PC-3 (cell line): ENCODE measurements at regions of chr12 and their contacts with region 1.

Region 1: GRCh38 chr12:67910360-67911274 is 78.6 kb upstream of the IFNG-AS1 start:
- DNase-seq: peak; percentile 97
- ATAC-seq: peak; percentile 81
- H3K4me3 ChIP-seq: no peak overlapping the region
- H3K27ac ChIP-seq: peak overlapping the region; percentile 89
- H3K4me1 ChIP-seq: peaks cover 38% of the 10 kb centered on the region
- H3K27me3 ChIP-seq: no peaks in the 10 kb centered on the region
- CTCF ChIP-seq: no peak

Region 2: GRCh38 chr12:67592216-67593011 is 318.2 kb before region 1 on chr12:
- CTCF ChIA-PET with region 1: no interaction called
- POLR2A ChIA-PET with region 1: interaction called, 16 read pairs
- intact Hi-C with region 1: no loop called
- DNase-seq: peak; percentile 66
- ATAC-seq: peak; percentile 56
- H3K4me3 ChIP-seq: peak overlapping the region; percentile 47
- H3K27ac ChIP-seq: peak overlapping the region; percentile 81
- H3K4me1 ChIP-seq: peaks cover 37% of the 10 kb centered on the region
- H3K27me3 ChIP-seq: no peaks in the 10 kb centered on the region
- CTCF ChIP-seq: no peak

Region 3: DNA sequence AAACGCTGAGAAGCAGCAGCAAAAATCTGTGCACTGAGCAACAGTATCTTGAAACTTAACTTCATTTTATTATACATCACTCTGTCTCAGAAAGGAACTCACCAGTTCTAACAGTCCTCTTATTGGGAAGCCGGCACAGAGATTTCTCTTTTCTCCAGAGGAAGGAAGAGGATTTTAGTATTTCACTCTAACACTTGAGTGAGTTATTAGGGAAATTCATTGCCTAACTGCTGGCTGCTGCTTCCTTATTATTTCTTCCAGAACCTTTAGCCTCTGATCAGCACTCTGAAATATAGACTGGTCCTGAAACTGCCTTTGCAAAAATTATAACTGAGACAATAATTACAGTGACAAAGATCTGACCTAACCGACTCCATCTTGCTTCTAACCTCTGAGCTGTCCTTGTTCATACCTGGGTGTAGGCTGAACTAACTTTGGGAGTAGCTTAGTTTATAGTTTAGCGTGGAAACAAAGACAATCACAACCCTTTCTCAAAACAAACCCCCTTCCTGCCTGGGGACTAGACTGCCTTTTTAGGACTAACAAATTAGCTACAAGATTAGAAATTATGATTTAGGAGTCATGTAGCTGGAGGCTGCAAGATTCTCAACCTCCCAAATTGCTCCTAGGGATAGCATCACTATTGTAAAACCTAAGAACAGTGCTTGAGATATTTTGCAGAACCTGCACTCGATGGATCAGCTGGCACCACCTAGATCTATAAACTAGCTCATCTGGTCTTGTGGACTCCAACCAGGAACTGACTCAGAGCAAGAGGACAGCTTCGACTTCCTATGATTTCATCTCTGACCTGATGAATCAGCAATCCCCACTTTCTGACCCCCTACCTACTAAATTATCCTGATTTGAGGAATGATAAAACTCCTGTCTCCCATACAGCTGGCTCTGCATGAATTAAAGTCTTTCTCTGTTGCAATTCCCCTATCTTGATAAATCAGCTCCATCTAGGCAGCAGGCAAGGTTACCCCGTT is 144.5 kb before region 1 on chr12:
- CTCF ChIA-PET with region 1: no interaction called
- POLR2A ChIA-PET with region 1: interaction called, 3 read pairs
- intact Hi-C with region 1: loop called (anchors 5 kb)
- DNase-seq: peak; percentile 94
- ATAC-seq: peak; percentile 97
- H3K4me3 ChIP-seq: no peak overlapping the region
- H3K27ac ChIP-seq: peak overlapping the region; percentile 81
- H3K4me1 ChIP-seq: peaks cover 19% of the 10 kb centered on the region
- H3K27me3 ChIP-seq: no peaks in the 10 kb centered on the region
- CTCF ChIP-seq: no peak

Region 4: DNA sequence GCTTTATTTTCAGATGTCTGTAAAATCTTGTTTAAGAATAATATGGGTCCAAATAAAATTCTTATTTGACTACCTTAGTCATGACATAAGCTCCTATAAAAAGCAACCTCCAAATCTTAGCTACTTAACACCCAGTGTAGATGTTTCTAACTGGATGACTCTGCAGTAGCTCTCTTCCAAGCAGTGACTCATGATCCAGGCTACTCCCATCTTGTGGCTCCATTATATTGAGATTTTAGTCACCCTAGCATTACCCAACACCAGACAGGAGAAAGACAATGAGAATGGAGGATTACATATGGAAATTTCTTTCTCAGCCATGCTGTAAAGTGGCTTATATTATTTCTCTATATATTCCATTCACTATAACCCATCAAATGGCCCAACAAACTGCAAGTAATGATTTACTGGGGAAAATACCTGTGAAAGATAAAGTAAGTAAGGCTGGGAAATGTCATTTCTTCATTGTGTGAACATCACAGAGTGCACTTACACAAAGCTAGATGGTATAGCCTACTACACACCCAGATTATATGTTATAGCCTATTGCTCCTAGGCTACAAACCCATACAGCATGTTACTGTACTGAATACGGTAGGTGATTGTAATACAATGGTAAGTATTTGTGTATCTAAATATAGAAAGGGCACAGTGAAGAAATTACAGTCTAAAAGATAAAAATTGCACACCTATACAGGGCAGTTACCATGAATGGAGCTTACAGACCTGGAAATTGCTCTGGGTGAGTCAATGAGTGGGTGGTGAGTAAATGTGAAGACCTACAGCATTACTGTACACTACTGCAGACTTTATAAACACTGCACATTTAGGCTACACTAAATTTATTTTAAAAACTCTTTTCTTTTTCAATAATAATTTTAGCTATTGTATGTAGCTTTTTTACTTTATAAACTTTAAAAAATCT is 98.9 kb before region 1 on chr12:
- CTCF ChIA-PET with region 1: no interaction called
- POLR2A ChIA-PET with region 1: no interaction called
- intact Hi-C with region 1: loop called (anchors 5 kb)
- DNase-seq: peak; percentile 84
- ATAC-seq: peak; percentile 86
- H3K4me3 ChIP-seq: no peak overlapping the region
- H3K27ac ChIP-seq: peak overlapping the region; percentile 76
- H3K4me1 ChIP-seq: peaks cover 30% of the 10 kb centered on the region
- H3K27me3 ChIP-seq: no peaks in the 10 kb centered on the region
- CTCF ChIP-seq: no peak

Region 5: GRCh38 chr12:67928621-67929388 is 18.2 kb after region 1 on chr12:
- CTCF ChIA-PET with region 1: no interaction called
- POLR2A ChIA-PET with region 1: no interaction called
- intact Hi-C with region 1: no loop called
- DNase-seq: peak; percentile 5
- ATAC-seq: peak; percentile 15; the same call in 1 of the 2 replicates
- H3K4me3 ChIP-seq: no peak overlapping the region
- H3K27ac ChIP-seq: no peak overlapping the region
- H3K4me1 ChIP-seq: no peaks in the 10 kb centered on the region
- H3K27me3 ChIP-seq: no peaks in the 10 kb centered on the region
- CTCF ChIP-seq: no peak

Region 6: GRCh38 chr12:68001486-68002466 is 91.2 kb after region 1 on chr12:
- CTCF ChIA-PET with region 1: no interaction called
- POLR2A ChIA-PET with region 1: no interaction called
- intact Hi-C with region 1: no loop called
- DNase-seq: peak; percentile 60
- ATAC-seq: peak; percentile 38; the same call in 1 of the 2 replicates
- H3K4me3 ChIP-seq: no peak overlapping the region
- H3K27ac ChIP-seq: no peak overlapping the region
- H3K4me1 ChIP-seq: no peaks in the 10 kb centered on the region
- H3K27me3 ChIP-seq: no peaks in the 10 kb centered on the region
- CTCF ChIP-seq: peak; percentile 71